HEK293 (cell line): ENCODE measurements at regions of chr19 and their contacts with region 1.

Region 1: DNA sequence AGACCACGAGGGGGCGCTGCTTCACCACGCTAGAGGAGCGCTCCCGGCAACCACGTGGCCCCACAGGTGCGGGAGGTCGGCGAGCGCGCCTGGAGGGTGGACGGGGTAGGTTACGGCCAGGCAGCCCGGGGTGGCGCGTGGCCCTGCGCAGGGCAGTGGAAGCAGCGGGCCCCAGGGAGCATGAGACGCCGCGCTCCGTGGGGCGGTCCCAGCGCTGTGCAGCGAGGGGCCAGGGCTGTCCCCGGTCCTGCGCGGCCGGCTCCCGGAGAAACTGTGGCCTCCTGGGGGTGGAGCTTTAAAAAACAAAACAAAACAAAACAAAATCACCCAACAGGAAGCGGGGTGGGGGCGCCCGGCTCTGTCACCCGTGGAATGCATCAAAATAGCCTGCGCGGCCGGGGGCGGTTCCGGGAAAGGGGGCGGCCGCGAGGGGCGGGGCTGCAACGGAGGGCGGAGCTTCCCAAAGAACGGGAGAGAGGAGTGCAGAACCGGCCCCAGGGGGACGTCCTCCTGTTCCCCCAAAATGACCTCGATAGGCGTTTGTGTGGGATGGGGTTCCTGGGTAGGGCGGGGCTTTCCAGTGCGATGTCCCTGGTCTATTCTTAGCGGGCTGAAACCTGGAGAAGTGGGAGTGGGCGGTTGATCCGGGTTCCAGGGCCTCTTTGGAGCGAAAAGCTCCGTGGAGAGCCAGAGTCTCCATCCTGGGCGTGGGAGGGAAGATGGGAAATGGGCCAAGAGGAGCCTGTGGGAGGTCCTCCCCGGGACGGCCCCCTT is 27.3 kb downstream of the NUMBL start:
- H3K4me3 ChIP-seq: peak overlapping the region; percentile 56
- H3K27ac ChIP-seq: peak overlapping the region; percentile 89; the same call in 1 of the 2 replicates
- H3K4me1 ChIP-seq: peaks cover 13% of the 10 kb centered on the region
- CTCF ChIP-seq: peak; percentile 100

Region 2: GRCh38 chr19:40530091-40530901 is 132.8 kb before region 1 on chr19:
- CTCF ChIA-PET with region 1: no interaction called
- POLR2A ChIA-PET with region 1: no interaction called
- H3K4me3 ChIP-seq: peak overlapping the region; percentile 30
- H3K27ac ChIP-seq: peak overlapping the region; percentile 39; the same call in 1 of the 2 replicates
- H3K4me1 ChIP-seq: peaks cover 17% of the 10 kb centered on the region
- CTCF ChIP-seq: peak; percentile 59

Region 3: GRCh38 chr19:40650749-40651305 is 12.3 kb before region 1 on chr19:
- CTCF ChIA-PET with region 1: interaction called, 25 read pairs
- POLR2A ChIA-PET with region 1: interaction called, 5 read pairs
- H3K4me3 ChIP-seq: no peak overlapping the region
- H3K27ac ChIP-seq: no peak overlapping the region
- H3K4me1 ChIP-seq: peaks cover 11% of the 10 kb centered on the region
- CTCF ChIP-seq: no peak

Region 4: GRCh38 chr19:40750059-40750873 is 87.2 kb after region 1 on chr19 and contains the start of gene ACTMAP:
- CTCF ChIA-PET with region 1: interaction called, 7 read pairs
- POLR2A ChIA-PET with region 1: interaction called, 23 read pairs
- H3K4me3 ChIP-seq: peak within 1 kb of the TSS; percentile 64
- H3K27ac ChIP-seq: peak within 1 kb of the TSS; percentile 93
- H3K4me1 ChIP-seq: peaks cover 32% of the 10 kb centered on the region
- CTCF ChIP-seq: no peak

Region 5: DNA sequence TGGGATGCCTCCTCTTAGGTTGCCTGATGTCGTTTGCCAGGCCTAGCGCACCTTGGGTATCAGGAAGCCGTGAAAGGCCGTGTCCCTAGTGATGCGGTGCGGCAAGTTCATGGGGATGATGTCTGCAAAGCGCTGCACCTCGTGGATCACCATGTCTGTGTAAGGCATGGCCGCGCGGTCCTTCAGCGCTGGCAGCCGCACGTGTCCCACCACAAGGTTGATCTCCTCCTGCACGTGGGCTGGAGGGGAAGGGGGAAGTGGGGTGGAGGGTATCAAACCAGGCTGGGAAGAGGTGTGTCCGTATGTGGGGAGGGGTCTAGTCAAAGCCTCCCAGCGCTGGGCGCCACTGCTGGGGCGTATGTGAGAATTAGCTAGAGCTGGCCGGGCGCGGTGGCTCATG is 159.1 kb after region 1 on chr19:
- CTCF ChIA-PET with region 1: interaction called, 40 read pairs
- POLR2A ChIA-PET with region 1: interaction called, 5 read pairs
- H3K4me3 ChIP-seq: no peak overlapping the region
- H3K27ac ChIP-seq: peak overlapping the region; percentile 54; the same call in 1 of the 2 replicates
- H3K4me1 ChIP-seq: peaks cover 20% of the 10 kb centered on the region
- CTCF ChIP-seq: no peak

Region 6: GRCh38 chr19:40858109-40858508 is 195.0 kb after region 1 on chr19:
- CTCF ChIA-PET with region 1: no interaction called
- POLR2A ChIA-PET with region 1: no interaction called
- H3K4me3 ChIP-seq: no peak overlapping the region
- H3K27ac ChIP-seq: no peak overlapping the region
- H3K4me1 ChIP-seq: peaks cover 9% of the 10 kb centered on the region
- CTCF ChIP-seq: peak; percentile 50; the same call in 1 of the 2 replicates

Region 7: GRCh38 chr19:41144403-41144802 is 481.3 kb after region 1 on chr19:
- CTCF ChIA-PET with region 1: interaction called, 13 read pairs
- POLR2A ChIA-PET with region 1: interaction called, 7 read pairs
- H3K4me3 ChIP-seq: no peak overlapping the region
- H3K27ac ChIP-seq: no peak overlapping the region
- H3K4me1 ChIP-seq: no peaks in the 10 kb centered on the region
- CTCF ChIP-seq: peak; percentile 91